ENCODE measurements at regions of chr11 and their contacts with region 1.

Region 1: GRCh38 chr11:93234602-93235207 is 36.9 kb upstream of the SLC36A4 start:
- DNase-seq: peak; percentile 77
- ATAC-seq: peak; percentile 96 to 97
- H3K4me3 ChIP-seq: no peak overlapping the region
- H3K27ac ChIP-seq: no peak overlapping the region
- H3K4me1 ChIP-seq: no peaks in the 10 kb centered on the region
- H3K27me3 ChIP-seq: no peaks in the 10 kb centered on the region
- CTCF ChIP-seq: peak; percentile 92

Region 2: DNA sequence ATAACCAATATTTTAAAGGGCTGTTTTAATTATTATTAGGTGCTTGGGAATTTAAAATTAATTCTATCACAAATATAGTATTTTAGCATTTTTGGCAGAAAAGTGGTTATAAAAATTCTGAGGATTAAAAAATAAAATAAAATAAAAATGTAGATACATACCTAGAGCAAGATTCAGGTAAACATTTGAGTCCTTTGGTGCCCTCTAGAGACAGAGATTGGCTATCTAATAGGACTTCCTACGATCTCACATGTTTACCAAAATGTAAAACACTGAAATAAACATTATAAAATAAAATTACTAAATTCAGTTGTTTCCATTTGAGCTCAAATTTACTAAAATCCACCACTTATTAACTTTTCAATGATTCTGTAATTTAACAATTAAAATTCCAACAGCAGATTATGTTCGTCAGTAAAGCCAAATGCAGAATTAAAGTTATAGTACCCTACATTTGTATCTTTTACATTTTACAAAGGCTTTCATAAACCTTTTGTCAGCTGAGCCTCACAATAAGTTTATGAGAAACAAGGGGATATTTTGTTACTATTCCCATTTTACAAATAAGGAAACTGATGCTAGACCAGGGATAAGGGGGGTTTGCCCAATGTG is 64.6 kb before region 1 on chr11:
- intact Hi-C with region 1: no loop called
- DNase-seq: no peak
- ATAC-seq: no peak
- H3K4me3 ChIP-seq: no peak overlapping the region
- H3K27ac ChIP-seq: no peak overlapping the region
- H3K4me1 ChIP-seq: no peaks in the 10 kb centered on the region
- H3K27me3 ChIP-seq: no peaks in the 10 kb centered on the region
- CTCF ChIP-seq: no peak

Region 3: GRCh38 chr11:93396316-93396715 is 161.6 kb after region 1 on chr11:
- intact Hi-C with region 1: no loop called
- DNase-seq: no peak
- ATAC-seq: no peak
- H3K4me3 ChIP-seq: no peak overlapping the region
- H3K27ac ChIP-seq: no peak overlapping the region
- H3K4me1 ChIP-seq: no peaks in the 10 kb centered on the region
- H3K27me3 ChIP-seq: no peaks in the 10 kb centered on the region
- CTCF ChIP-seq: no peak

Region 4: DNA sequence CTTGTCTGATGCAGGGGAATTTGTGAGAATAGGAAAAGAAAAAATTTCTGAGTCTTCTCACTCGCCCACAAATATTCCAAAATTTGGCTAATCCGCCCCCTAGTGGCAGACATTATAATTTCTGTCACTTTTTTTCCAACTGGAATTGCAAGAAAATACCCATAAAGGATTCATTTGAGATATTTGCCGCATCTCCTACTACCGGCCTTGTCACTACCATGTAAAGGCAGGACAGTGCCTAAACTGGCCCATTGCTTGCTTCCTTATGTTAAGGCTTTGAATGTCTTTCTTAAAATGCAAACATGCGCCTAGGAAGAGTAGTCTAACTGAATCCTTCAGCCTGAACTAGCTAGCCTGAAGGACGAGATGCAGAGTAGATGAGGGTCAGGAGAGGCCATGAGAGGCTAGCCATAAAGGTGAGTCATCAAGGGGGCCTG is 417.5 kb after region 1 on chr11:
- intact Hi-C with region 1: loop called (anchors 5 kb)
- DNase-seq: no peak
- ATAC-seq: no peak
- H3K4me3 ChIP-seq: no peak overlapping the region
- H3K27ac ChIP-seq: no peak overlapping the region
- H3K4me1 ChIP-seq: no peaks in the 10 kb centered on the region
- H3K27me3 ChIP-seq: peaks cover 7% of the 10 kb centered on the region
- CTCF ChIP-seq: peak; percentile 71

Measured in lower lobe of right lung (tissue), 2 donors.